Dendritic cell treated with granulocyte-macrophage colony-stimulating factor and Interleukin-4, amounts not matched to agents 40 ng/mL and 50 ng/mL, for 4 days (primary cell): ENCODE measurements at regions of chr12 and their contacts with region 1.

Region 1: DNA sequence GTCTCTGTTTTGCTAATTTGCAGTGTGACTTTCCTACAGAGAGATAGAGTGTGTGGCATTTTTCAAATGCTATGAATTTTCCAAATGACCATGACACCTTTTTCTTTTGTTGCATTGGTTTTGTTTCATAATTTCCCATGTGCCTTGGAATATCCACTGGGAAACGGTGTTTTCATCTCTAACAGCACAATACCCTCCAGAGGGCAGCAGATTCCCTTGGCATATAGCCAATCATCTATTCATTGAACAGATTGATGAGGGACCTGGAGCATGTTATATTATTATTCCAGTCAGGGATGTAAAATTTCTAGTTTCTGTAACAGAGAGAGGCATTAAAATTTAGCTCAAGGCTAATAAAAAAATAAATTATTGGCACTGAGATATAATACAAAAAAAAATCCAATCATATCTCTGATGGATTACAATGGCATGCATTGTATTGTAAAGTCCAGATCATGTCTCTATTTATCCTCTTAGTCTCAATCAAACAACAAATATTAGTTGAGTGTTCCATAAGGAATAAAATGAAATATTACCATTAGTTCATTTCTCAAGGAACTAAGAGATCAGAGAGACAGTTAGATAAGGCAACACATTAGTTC is 29.6 kb upstream of the NTN4 start:
- H3K4me3 Mint-ChIP-seq: no peak overlapping the region
- H3K27ac Mint-ChIP-seq: no peak overlapping the region
- H3K4me1 Mint-ChIP-seq: no peaks in the 10 kb centered on the region
- H3K27me3 Mint-ChIP-seq: peaks cover 9% of the 10 kb centered on the region

Region 2: DNA sequence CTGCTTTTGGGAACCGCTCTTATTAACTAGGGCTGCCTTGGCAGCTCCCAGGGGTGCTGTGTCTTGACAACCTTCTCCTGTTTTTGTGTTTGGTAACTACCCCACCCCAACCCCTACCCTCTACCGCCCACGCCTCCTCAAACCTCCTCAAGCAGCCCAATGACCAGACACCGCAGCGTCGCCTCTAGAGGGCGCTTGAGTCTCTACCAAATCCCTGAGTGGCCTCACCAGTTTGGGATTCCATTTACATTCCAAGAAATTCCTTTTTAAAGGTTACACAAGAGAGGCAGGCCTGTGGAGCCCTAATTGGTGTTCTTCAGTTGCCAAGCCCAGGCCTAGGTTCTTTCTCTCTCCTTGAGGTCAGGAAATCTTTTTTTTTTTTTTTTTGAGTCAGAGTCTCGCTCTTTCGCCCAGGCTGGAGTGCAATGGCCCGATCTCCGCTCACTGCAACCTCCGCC is 196.6 kb before region 1 on chr12:
- intact Hi-C with region 1: loop called (anchors 2 kb)
- H3K4me3 Mint-ChIP-seq: no peak overlapping the region
- H3K27ac Mint-ChIP-seq: no peak overlapping the region
- H3K4me1 Mint-ChIP-seq: no peaks in the 10 kb centered on the region
- H3K27me3 Mint-ChIP-seq: peaks cover 6% of the 10 kb centered on the region

Region 3: GRCh38 chr12:95881331-95881955 is 61.2 kb after region 1 on chr12:
- intact Hi-C with region 1: no loop called
- H3K4me3 Mint-ChIP-seq: no peak overlapping the region
- H3K27ac Mint-ChIP-seq: no peak overlapping the region
- H3K4me1 Mint-ChIP-seq: no peaks in the 10 kb centered on the region
- H3K27me3 Mint-ChIP-seq: peaks cover 1% of the 10 kb centered on the region

Region 4: DNA sequence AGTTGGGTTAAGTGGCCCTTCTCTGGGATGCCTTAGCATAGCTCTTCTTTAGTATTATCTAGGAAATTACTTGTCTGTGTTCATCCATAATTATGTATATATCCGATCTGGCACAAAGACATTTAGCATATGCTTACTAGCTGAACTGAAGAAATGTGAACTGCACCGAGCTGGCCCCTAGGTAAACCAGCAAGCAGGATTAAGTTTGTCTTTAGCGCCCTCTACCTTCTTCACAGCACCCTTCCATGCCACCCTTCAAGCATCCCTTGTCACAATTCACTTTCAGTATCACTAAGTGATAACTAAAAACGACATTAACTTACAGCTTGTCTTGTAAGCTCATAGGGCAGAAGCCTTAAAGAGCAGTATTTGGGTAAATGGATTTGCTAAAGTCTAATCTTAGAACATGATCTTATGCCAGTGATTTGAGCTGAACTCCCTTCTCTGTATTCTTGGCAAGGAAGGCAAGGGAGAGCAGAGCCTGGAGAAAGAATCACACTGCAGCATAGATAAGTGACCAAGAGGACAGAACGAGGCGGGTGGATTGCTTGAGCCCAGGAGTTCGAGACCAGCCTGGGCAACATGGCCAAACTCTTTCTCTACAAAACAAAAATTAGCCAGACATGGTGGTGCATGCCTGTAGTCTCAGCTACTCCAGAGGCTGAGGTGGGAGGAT is 178.5 kb after region 1 on chr12:
- intact Hi-C with region 1: loop called (anchors 5 kb)
- H3K4me3 Mint-ChIP-seq: no peak overlapping the region
- H3K27ac Mint-ChIP-seq: no peak overlapping the region
- H3K4me1 Mint-ChIP-seq: peaks cover 39% of the 10 kb centered on the region
- H3K27me3 Mint-ChIP-seq: no peaks in the 10 kb centered on the region